IMR-90 (cell line): ENCODE measurements at regions of chr3 and their contacts with region 1.

Region 1: DNA sequence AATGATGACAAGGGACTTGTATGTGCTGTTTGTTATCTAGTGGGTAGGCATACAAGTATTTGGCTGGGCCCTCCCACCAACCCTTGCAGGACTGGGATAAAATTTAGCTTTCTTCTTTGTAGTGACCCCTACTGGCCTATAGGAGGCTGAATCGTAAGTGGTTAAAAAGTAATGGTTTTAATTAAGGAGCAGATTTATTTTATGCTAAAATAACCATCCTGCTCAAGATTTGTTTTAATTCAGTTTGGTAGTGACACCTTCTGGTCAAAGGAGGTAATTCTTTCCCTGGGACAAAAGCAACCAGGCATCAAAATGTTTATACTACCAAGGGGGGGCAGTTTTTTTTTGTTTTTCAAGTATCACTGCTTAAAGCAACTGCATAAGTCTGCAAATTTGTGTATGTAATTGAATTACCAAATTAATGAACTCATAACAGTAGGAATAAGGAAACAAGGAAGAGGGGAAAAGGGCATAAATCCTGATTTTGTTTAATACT is 70.7 kb downstream of the TOP2B start:
- DNase-seq: peak; percentile 88
- ATAC-seq: peak; percentile 83
- H3K4me3 ChIP-seq: no peak overlapping the region
- H3K27ac ChIP-seq: no peak overlapping the region
- H3K4me1 ChIP-seq: peaks cover 3% of the 10 kb centered on the region
- H3K27me3 ChIP-seq: no peaks in the 10 kb centered on the region
- CTCF ChIP-seq: peak; percentile 89
- POLR2A ChIP-seq: 0 out of 2 replicates have a peak, but pooled peaks have one; percentile 6
- RAD21 ChIP-seq: peak; percentile 76

Region 2: GRCh38 chr3:23999012-23999641 is 1594.9 kb before region 1 on chr3:
- CTCF ChIA-PET with region 1: no interaction called
- POLR2A ChIA-PET with region 1: no interaction called
- dilution Hi-C with region 1: no loop called
- in situ Hi-C with region 1: no loop called
- intact Hi-C with region 1: loop called (anchors 1 kb)
- DNase-seq: peak; percentile 42
- ATAC-seq: peak; percentile 57; the same call in 1 of the 2 replicates
- H3K4me3 ChIP-seq: no peak overlapping the region
- H3K27ac ChIP-seq: no peak overlapping the region
- H3K4me1 ChIP-seq: peaks cover 7% of the 10 kb centered on the region; the same call in 1 of the 2 replicates
- H3K27me3 ChIP-seq: no peaks in the 10 kb centered on the region; the same call in none of the 2 replicates
- CTCF ChIP-seq: peak; percentile 98
- POLR2A ChIP-seq: peak; percentile 50
- RAD21 ChIP-seq: peak; percentile 100

Region 3: GRCh38 chr3:24264748-24265158 is 1329.3 kb before region 1 on chr3:
- CTCF ChIA-PET with region 1: interaction called, 3 read pairs
- POLR2A ChIA-PET with region 1: no interaction called
- dilution Hi-C with region 1: no loop called
- in situ Hi-C with region 1: loop called (anchors 25 kb)
- intact Hi-C with region 1: loop called (anchors 10 kb)
- DNase-seq: peak; percentile 32
- ATAC-seq: peak; percentile 63
- H3K4me3 ChIP-seq: no peak overlapping the region
- H3K27ac ChIP-seq: no peak overlapping the region
- H3K4me1 ChIP-seq: no peaks in the 10 kb centered on the region
- H3K27me3 ChIP-seq: peaks cover 20% of the 10 kb centered on the region
- CTCF ChIP-seq: peak; percentile 65
- POLR2A ChIP-seq: no peak
- RAD21 ChIP-seq: peak; percentile 59

Region 4: GRCh38 chr3:24773798-24774197 is 820.3 kb before region 1 on chr3:
- CTCF ChIA-PET with region 1: no interaction called
- POLR2A ChIA-PET with region 1: no interaction called
- dilution Hi-C with region 1: no loop called
- in situ Hi-C with region 1: loop called (anchors 10 kb)
- intact Hi-C with region 1: loop called (anchors 1 kb)
- DNase-seq: peak; percentile 41
- ATAC-seq: peak; percentile 72
- H3K4me3 ChIP-seq: no peak overlapping the region
- H3K27ac ChIP-seq: no peak overlapping the region
- H3K4me1 ChIP-seq: no peaks in the 10 kb centered on the region
- H3K27me3 ChIP-seq: no peaks in the 10 kb centered on the region
- CTCF ChIP-seq: peak; percentile 49
- POLR2A ChIP-seq: no peak
- RAD21 ChIP-seq: peak; percentile 50; the same call in 1 of the 2 replicates

Region 5: DNA sequence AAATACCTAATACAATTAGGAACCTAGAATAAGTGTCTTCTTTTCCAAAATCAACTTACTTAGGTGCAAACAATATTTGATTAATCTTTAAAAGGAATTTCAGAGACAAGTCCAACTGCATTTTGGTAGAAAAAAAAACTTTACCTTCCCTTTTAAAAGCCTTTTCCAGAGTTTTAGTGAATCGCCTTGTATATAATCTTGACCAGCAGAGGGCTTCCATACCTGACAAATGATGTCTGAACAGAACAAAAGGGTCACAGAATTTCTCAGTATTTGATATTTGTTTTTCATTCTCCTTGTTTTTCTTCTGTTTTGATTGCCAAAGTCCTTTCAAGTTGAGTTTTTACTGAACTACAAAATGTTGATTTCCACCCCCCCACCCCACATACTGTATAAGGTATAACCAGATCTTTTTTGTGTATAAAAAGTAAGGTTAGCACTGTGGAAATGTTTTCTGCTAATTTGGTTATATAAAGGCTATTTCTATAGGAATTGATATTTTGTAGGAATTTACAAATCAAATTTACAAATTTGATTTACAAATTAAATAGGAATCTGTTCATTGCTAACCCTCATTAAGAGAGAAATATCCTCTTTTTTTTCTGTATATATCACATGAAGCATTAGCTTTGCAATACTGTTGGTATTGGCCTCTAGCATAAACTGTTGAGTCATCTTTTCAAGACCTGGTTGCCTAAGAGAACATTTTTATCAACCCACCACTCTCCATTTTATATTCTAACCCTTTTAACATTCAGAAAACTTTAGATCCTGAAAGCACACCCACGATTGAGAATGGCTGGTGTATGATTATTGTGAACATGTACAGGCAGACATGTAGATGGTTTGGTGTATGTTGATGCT is 630.1 kb before region 1 on chr3:
- CTCF ChIA-PET with region 1: no interaction called
- POLR2A ChIA-PET with region 1: no interaction called
- dilution Hi-C with region 1: no loop called
- in situ Hi-C with region 1: loop called (anchors 10 kb)
- intact Hi-C with region 1: loop called (anchors 1 kb)
- DNase-seq: peak; percentile 17
- ATAC-seq: no peak
- H3K4me3 ChIP-seq: no peak overlapping the region
- H3K27ac ChIP-seq: no peak overlapping the region
- H3K4me1 ChIP-seq: no peaks in the 10 kb centered on the region
- H3K27me3 ChIP-seq: no peaks in the 10 kb centered on the region
- CTCF ChIP-seq: peak; percentile 25; the same call in 1 of the 2 replicates
- POLR2A ChIP-seq: no peak
- RAD21 ChIP-seq: no peak

Region 6: GRCh38 chr3:25532431-25533162 is 61.5 kb before region 1 on chr3:
- CTCF ChIA-PET with region 1: interaction called, 10 read pairs
- POLR2A ChIA-PET with region 1: no interaction called
- dilution Hi-C with region 1: no loop called
- in situ Hi-C with region 1: no loop called
- intact Hi-C with region 1: loop called (anchors 1 kb)
- DNase-seq: peak; percentile 33
- ATAC-seq: no peak
- H3K4me3 ChIP-seq: no peak overlapping the region
- H3K27ac ChIP-seq: no peak overlapping the region
- H3K4me1 ChIP-seq: no peaks in the 10 kb centered on the region
- H3K27me3 ChIP-seq: no peaks in the 10 kb centered on the region; the same call in 1 of the 2 replicates
- CTCF ChIP-seq: peak; percentile 51
- POLR2A ChIP-seq: no peak
- RAD21 ChIP-seq: peak; percentile 54